ENCODE measurements at regions of chr3 and their contacts with region 1.

Region 1: GRCh38 chr3:154334973-154335420 is 10.7 kb upstream of the DHX36 start:
- DNase-seq: peak in 1 of 2 experiments; percentile 43
- H3K4me3 ChIP-seq: no peak overlapping the region
- H3K27ac ChIP-seq: no peak overlapping the region
- H3K4me1 ChIP-seq: no peaks in the 10 kb centered on the region
- H3K27me3 ChIP-seq: no peaks in the 10 kb centered on the region
- CTCF ChIP-seq: peak; percentile 79

Region 2: GRCh38 chr3:154540950-154541604 is 206.1 kb after region 1 on chr3:
- CTCF ChIA-PET with region 1: no interaction called
- POLR2A ChIA-PET with region 1: interaction called, 12 read pairs
- intact Hi-C with region 1: loop called (anchors 10 kb)
- DNase-seq: no peak
- H3K4me3 ChIP-seq: no peak overlapping the region
- H3K27ac ChIP-seq: no peak overlapping the region
- H3K4me1 ChIP-seq: no peaks in the 10 kb centered on the region
- H3K27me3 ChIP-seq: no peaks in the 10 kb centered on the region
- CTCF ChIP-seq: no peak

Region 3: DNA sequence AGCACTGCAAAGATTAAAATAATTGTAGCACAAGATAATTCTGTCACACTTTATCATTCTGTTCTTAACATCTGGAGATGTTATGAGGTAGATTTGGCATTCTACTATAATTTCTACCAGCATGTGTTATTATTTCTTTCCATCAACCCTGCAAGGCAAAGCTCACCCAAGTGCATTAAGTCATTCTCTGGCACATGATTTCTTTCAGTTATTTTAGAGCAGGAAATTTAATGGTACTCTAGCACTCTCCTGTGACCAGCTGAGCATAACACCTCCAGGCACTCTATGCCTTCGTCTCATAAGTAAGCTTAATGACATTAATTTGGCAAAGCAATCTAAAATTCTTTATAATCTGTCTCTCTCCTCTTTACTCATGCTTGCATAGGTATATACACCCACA is 395.2 kb after region 1 on chr3:
- CTCF ChIA-PET with region 1: no interaction called
- POLR2A ChIA-PET with region 1: no interaction called
- intact Hi-C with region 1: loop called (anchors 5 kb)
- DNase-seq: no peak
- H3K4me3 ChIP-seq: no peak overlapping the region
- H3K27ac ChIP-seq: no peak overlapping the region
- H3K4me1 ChIP-seq: no peaks in the 10 kb centered on the region
- H3K27me3 ChIP-seq: no peaks in the 10 kb centered on the region
- CTCF ChIP-seq: 0 out of 2 replicates have a peak, but pooled peaks have one; percentile 22

Region 4: DNA sequence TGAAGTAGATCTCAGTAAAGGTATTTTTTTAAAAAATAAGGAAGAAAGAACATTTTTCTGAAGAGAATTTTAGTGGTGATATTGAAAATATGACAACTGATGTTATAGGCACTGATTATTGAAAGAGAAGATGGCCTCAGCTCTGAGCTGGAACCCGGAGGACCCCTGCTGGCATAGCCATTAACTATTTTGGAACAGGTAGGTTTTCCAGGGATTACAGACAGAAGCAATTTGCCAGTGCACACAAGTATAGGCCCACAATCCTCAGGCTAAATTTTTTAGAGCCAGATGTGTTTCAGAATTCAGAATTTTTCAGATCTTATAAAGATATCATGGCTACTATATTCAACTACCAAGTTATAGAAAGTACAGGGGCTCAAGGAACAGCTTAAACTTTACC is 411.0 kb after region 1 on chr3:
- CTCF ChIA-PET with region 1: no interaction called
- POLR2A ChIA-PET with region 1: no interaction called
- intact Hi-C with region 1: loop called (anchors 5 kb)
- DNase-seq: no peak
- H3K4me3 ChIP-seq: no peak overlapping the region
- H3K27ac ChIP-seq: no peak overlapping the region
- H3K4me1 ChIP-seq: no peaks in the 10 kb centered on the region
- H3K27me3 ChIP-seq: no peaks in the 10 kb centered on the region
- CTCF ChIP-seq: peak; percentile 33; the same call in 1 of the 2 replicates